ENCODE measurements at regions of chr10 and their contacts with region 1.

Region 1: DNA sequence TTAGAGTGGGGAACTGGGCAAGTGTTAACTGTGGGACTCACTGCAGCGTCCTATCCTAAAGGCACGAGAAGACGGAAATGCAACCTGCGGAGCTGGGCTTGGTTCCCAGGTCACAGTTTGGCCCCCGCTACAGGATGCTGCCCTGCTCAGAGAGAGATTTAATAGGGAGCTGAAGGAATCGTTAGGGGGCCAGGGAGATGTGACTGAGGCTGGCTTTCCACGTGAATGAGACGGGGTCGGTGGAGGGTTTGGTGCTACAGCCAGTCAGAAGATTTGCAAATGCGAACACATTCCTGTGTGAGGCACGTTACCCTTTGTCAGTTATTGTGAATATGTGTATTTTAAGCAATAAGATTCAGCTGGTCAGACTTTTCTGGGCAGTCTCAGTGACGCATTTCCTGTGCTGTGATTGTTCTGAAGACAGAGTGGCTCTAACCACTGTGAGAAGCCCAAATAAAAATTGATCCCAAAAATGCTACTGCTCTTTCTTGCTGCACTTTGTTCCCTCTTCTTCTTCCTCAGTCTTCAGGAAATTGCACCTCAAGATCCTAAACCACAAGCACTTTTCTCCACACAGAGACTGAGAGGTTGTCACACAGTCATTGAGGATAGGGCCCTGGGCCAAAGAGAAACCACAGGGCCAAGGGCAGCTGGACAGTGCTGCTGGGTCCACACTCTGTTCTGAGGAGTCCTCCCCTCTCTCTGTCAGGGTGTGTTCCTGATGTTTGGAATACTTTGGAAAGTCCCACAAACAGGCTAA is 21.2 kb downstream of the CYP17A1 start:
- DNase-seq: peak; percentile 44 to 81
- ATAC-seq: peak; percentile 65 to 84 (median 78)
- H3K4me3 ChIP-seq: peak overlapping the region in 1 of 10 donors; percentile 6
- H3K27ac ChIP-seq: peak overlapping the region; percentile 87 to 96 (median 91)
- H3K4me1 ChIP-seq: peaks cover 23 to 88% (median 53%) of the 10 kb centered on the region in 9 donors
- H3K27me3 ChIP-seq: no peaks in the 10 kb centered on the region
- CTCF ChIP-seq: no peak

Region 2: GRCh38 chr10:102743588-102744373 is 72.2 kb before region 1 on chr10 and contains the start of gene WBP1L:
- intact Hi-C with region 1: loop called in 6 of 10 experiments (anchors 5 to 10 kb)
- DNase-seq: peak; percentile 93 to 99
- ATAC-seq: peak; percentile 96 to 98 (median 98)
- H3K4me3 ChIP-seq: peak within 1 kb of the TSS; percentile 83 to 99 (median 96)
- H3K27ac ChIP-seq: peak within 1 kb of the TSS; percentile 79 to 98 (median 94)
- H3K4me1 ChIP-seq: peaks cover 0 to 58% (median 32%) of the 10 kb centered on the region in 9 donors
- H3K27me3 ChIP-seq: no peaks in the 10 kb centered on the region
- CTCF ChIP-seq: no peak
- total RNA-seq, gene WBP1L: 17.3 to 33.3 (median 21.0) TPM

Region 3: GRCh38 chr10:102752934-102753664 is 62.9 kb before region 1 on chr10:
- intact Hi-C with region 1: loop called in 8 of 10 experiments (anchors 2 to 10 kb)
- DNase-seq: peak in 1 of 2 donors; percentile 30
- ATAC-seq: peak; percentile 63 to 81 (median 76)
- H3K4me3 ChIP-seq: no peak overlapping the region
- H3K27ac ChIP-seq: peak overlapping the region; percentile 9 to 86 (median 72)
- H3K4me1 ChIP-seq: peaks cover 13 to 56% (median 26%) of the 10 kb centered on the region in 9 donors
- H3K27me3 ChIP-seq: no peaks in the 10 kb centered on the region
- CTCF ChIP-seq: peak; percentile 33 to 75 (median 59)

Region 4: GRCh38 chr10:102776779-102777456 is 39.1 kb before region 1 on chr10:
- intact Hi-C with region 1: loop called in 3 of 10 experiments (anchors 2 to 5 kb)
- DNase-seq: peak; percentile 64 to 92
- ATAC-seq: peak; percentile 68 to 87 (median 81)
- H3K4me3 ChIP-seq: peak overlapping the region; percentile 36 to 67 (median 59)
- H3K27ac ChIP-seq: peak overlapping the region; percentile 85 to 99 (median 97)
- H3K4me1 ChIP-seq: peaks cover 41 to 100% (median 87%) of the 10 kb centered on the region in 9 donors
- H3K27me3 ChIP-seq: no peaks in the 10 kb centered on the region
- CTCF ChIP-seq: no peak